MCF 10A (cell line): ENCODE measurements at regions of chr17 and their contacts with region 1.

Region 1: GRCh38 chr17:16599537-16599936 is 30.5 kb upstream of the ZNF287 start:
- DNase-seq: no peak
- H3K4me3 Mint-ChIP-seq: no peak overlapping the region
- H3K27ac Mint-ChIP-seq: no peak overlapping the region
- H3K4me1 Mint-ChIP-seq: no peaks in the 10 kb centered on the region
- H3K27me3 Mint-ChIP-seq: no peaks in the 10 kb centered on the region
- CTCF ChIP-seq: no peak

Region 2: GRCh38 chr17:16534236-16534635 is 65.3 kb before region 1 on chr17:
- CTCF ChIA-PET with region 1: no interaction called
- POLR2A ChIA-PET with region 1: no interaction called
- intact Hi-C with region 1: no loop called
- DNase-seq: no peak
- H3K4me3 Mint-ChIP-seq: no peak overlapping the region
- H3K27ac Mint-ChIP-seq: no peak overlapping the region
- H3K4me1 Mint-ChIP-seq: no peaks in the 10 kb centered on the region
- H3K27me3 Mint-ChIP-seq: peaks cover 23% of the 10 kb centered on the region
- CTCF ChIP-seq: no peak

Region 3: GRCh38 chr17:16589097-16589969 is 10.2 kb before region 1 on chr17:
- CTCF ChIA-PET with region 1: interaction called, 13 read pairs
- POLR2A ChIA-PET with region 1: no interaction called
- intact Hi-C with region 1: no loop called
- DNase-seq: peak; percentile 87
- H3K4me3 Mint-ChIP-seq: peak overlapping the region; percentile 70
- H3K27ac Mint-ChIP-seq: peak overlapping the region; percentile 35
- H3K4me1 Mint-ChIP-seq: peaks cover 12% of the 10 kb centered on the region
- H3K27me3 Mint-ChIP-seq: no peaks in the 10 kb centered on the region
- CTCF ChIP-seq: peak; percentile 96

Region 4: GRCh38 chr17:17125136-17126084 is 525.9 kb after region 1 on chr17:
- CTCF ChIA-PET with region 1: no interaction called
- POLR2A ChIA-PET with region 1: no interaction called
- intact Hi-C with region 1: no loop called
- DNase-seq: no peak
- H3K4me3 Mint-ChIP-seq: no peak overlapping the region
- H3K27ac Mint-ChIP-seq: no peak overlapping the region
- H3K4me1 Mint-ChIP-seq: peaks cover 10% of the 10 kb centered on the region
- H3K27me3 Mint-ChIP-seq: no peaks in the 10 kb centered on the region
- CTCF ChIP-seq: no peak